Caco-2 (cell line): ENCODE measurements at regions of chr2 and their contacts with region 1.

Region 1: DNA sequence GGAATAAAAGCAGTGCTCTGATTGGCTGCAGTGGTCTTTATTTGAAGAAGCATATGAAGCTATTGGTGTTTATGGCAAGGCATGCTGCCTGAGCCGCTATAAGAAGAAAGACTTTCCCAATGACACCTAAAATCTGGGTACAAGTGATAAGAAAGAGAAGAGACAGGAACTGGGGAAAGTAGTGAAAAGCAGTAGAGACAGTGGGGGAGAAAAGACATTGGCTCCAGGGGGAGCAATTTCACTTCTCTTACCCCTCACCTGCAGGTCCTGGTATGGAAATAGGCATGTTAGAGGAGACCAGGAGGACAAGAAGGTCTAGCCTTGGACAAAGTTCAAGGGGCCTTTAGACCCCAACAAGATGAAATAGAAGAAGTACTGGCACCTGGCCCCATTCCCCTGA is 47.1 kb downstream of the PLCL1 start:
- DNase-seq: peak in 1 of 2 experiments; percentile 16
- H3K4me3 ChIP-seq: no peak overlapping the region
- H3K4me3 Mint-ChIP-seq: no peak overlapping the region
- H3K27ac Mint-ChIP-seq: no peak overlapping the region
- H3K4me1 ChIP-seq: no peaks in the 10 kb centered on the region
- H3K4me1 Mint-ChIP-seq: peaks cover 5% of the 10 kb centered on the region
- H3K27me3 ChIP-seq: no peaks in the 10 kb centered on the region
- H3K27me3 Mint-ChIP-seq: peaks cover 6% of the 10 kb centered on the region
- CTCF ChIP-seq: peak in 1 of 2 experiments; percentile 48

Region 2: DNA sequence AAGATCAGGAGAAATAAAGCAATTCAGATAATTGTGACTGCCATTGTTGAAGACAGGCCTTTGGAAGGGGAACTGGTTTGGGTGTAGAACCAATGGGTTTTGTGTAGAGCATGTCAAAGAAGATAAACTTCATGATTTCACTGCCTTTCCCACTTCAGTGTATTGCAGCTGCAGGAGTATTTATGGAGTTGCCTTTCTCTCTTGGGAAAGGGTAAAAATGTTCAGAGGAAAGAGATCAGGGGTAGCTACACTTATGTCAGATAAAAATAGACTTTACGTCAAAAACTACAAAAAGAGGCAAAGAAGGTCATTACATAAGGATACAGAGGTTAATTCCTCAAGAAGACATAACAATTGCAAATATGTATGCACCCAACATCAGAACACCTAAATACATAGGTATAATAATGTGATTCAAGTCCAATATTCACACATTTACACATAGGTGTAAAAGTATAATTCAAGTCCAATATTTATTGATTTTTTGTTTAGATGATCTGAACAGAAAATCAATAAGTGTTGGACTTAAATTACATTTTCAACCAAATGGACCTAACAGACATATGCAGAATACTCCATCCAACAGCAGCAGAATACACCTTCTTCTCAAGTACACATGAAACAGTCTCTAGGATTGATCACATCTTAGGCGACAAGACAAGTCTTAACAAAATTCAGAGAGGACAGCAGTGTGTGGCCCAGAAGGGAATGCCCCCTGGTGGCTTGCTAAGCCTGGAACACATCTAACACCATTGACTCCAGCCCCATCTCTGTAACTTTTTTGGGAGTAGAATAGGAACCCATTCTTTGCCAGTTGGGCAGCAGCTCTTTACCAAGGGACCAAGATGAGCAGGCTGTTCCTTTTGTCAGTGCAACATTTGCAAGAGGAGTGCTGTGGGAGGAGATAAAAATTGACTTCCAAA is 202.6 kb after region 1 on chr2:
- CTCF ChIA-PET with region 1: no interaction called
- POLR2A ChIA-PET with region 1: no interaction called
- intact Hi-C with region 1: loop called (anchors 1 kb)
- DNase-seq: peak; percentile 49 to 51
- H3K4me3 ChIP-seq: no peak overlapping the region
- H3K4me3 Mint-ChIP-seq: no peak overlapping the region
- H3K27ac Mint-ChIP-seq: no peak overlapping the region
- H3K4me1 ChIP-seq: no peaks in the 10 kb centered on the region
- H3K4me1 Mint-ChIP-seq: no peaks in the 10 kb centered on the region
- H3K27me3 ChIP-seq: no peaks in the 10 kb centered on the region
- H3K27me3 Mint-ChIP-seq: peaks cover 5% of the 10 kb centered on the region
- CTCF ChIP-seq: peak; percentile 57 to 78

Region 3: DNA sequence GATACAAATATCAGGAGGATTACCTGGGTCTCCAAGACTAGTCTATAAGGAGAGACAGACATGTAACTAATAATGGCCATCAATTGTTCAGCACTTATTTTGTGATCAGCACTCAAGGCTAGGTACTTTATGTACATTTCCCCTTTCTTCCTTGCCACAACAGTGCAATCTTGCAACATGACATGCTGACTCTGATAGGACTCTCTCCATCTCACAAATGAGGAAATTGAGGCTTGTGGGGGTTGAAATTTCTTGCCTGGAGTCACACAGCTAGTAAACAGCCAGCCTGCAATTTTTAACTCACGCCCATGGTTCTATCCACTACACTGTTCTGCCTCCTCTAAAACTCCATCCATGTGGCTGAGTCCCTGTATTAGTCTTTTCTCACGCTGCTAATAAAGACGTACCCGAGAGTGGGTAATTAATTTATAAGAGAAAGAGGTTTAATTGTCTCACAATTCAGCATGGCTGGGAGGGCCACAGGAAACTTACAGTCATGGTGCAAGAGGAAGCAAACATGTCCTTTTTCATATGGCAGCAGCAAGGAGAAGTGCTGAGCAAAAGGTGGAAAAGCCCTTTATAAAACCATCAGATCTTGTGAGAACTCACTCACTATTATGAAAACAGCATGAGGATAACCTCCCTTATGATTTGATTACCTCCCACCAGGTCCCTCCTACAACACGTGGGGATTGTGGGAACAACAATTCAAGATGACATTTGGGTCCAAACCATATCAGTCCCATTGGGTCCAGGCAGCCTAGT is 255.4 kb after region 1 on chr2:
- CTCF ChIA-PET with region 1: no interaction called
- POLR2A ChIA-PET with region 1: no interaction called
- intact Hi-C with region 1: no loop called
- DNase-seq: no peak
- H3K4me3 ChIP-seq: no peak overlapping the region
- H3K4me3 Mint-ChIP-seq: no peak overlapping the region
- H3K27ac Mint-ChIP-seq: no peak overlapping the region
- H3K4me1 ChIP-seq: no peaks in the 10 kb centered on the region
- H3K4me1 Mint-ChIP-seq: no peaks in the 10 kb centered on the region
- H3K27me3 ChIP-seq: no peaks in the 10 kb centered on the region; the same call in 1 of the 2 replicates
- H3K27me3 Mint-ChIP-seq: no peaks in the 10 kb centered on the region
- CTCF ChIP-seq: no peak